HEK293T (cell line): ENCODE measurements at regions of chr5 and their contacts with region 1.

Region 1: DNA sequence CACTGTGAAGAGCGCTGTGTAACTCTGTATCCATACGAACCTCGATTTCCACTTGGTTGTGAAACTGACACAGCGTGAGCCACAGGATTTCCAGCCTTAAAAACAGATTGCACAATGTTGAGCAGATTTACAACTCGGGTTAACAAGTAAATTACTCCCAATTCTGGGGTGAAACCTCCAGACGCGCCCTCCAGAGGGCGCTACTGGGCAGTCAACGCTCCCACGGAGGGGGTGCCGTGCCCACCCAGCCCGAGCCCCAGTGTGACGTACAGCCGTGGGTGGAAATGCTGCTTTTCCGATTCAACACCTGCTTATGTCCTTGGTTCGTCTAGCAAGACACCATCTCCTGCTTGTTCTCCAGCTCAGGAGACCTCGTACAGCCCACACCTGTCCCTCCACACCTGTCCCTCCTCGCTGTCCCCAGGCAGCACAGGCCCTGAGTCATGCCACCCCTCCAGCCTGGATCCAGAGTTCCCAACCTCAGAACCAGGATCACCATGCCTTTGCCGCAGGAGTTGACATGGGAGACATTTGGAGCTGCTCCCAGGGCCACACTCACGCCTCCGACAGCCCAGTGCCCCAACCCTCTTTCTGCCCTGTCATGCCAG is 34.4 kb upstream of the SLC6A3 start:
- DNase-seq: peak; percentile 68

Region 2: DNA sequence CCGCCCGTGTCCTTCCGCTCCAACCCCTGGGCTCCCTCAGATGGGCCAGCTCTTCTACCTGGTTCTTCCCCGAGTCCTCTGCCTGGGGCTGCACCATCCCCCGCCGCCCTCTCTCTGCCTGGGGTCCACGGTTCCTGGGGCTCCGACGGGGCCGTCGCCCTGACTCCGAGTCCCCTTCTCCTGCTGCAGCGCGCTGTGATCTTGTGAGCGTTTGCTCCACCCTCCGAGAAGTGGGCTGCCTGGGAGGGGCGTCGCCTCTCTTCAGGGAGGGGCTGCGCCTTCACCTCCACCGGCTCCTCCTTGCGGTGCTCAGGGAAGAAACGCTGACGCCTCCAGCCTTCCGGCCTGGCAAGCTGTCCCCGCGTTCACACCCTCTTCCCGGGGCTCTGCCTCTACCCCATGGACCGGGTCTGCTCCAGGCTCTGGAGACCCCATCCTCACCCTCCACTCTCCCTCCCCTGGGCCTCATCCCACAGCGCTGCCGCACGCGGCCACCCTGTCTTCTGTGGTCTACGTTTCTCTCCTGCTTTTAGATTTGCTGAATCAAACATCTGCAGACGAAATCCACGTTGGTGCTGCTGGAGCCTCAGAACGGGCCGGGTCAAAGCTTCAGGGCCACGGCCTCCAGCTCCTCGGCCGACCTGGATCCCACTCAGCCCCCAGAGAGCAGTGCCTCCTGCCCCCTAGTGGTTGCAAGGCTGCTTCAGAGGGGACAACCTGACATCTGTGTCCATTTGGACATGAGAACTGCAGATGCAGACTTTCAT is 11.7 kb before region 1 on chr5:
- CTCF ChIA-PET with region 1: no interaction called
- POLR2A ChIA-PET with region 1: no interaction called
- DNase-seq: peak; percentile 46

Region 3: DNA sequence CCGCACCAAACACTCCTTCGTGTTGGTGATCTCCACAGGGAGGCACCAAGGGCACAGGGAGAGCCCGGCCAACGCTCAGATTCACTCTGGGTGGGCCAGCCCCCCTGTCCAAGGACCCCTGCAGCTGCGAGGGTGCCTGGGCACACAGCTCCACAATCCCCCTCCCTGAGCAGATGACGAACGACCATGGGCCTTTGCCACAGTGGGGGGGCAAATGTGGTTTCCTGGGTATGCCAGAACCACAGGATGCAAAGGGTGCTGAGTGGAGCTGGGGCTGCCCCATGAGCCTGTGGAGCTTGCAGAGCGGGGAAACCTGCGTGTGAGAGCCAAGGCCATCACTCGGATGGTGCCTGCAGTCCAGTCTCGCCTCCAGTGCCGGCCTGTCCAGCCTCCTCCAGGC is 13.1 kb after region 1 on chr5:
- CTCF ChIA-PET with region 1: interaction called, 11 read pairs
- POLR2A ChIA-PET with region 1: no interaction called
- DNase-seq: no peak

Region 4: GRCh38 chr5:1644810-1645571 is 165.3 kb after region 1 on chr5:
- CTCF ChIA-PET with region 1: interaction called, 10 read pairs
- POLR2A ChIA-PET with region 1: no interaction called
- DNase-seq: peak; percentile 87